ENCODE measurements at regions of chr2 and their contacts with region 1.

Region 1: DNA sequence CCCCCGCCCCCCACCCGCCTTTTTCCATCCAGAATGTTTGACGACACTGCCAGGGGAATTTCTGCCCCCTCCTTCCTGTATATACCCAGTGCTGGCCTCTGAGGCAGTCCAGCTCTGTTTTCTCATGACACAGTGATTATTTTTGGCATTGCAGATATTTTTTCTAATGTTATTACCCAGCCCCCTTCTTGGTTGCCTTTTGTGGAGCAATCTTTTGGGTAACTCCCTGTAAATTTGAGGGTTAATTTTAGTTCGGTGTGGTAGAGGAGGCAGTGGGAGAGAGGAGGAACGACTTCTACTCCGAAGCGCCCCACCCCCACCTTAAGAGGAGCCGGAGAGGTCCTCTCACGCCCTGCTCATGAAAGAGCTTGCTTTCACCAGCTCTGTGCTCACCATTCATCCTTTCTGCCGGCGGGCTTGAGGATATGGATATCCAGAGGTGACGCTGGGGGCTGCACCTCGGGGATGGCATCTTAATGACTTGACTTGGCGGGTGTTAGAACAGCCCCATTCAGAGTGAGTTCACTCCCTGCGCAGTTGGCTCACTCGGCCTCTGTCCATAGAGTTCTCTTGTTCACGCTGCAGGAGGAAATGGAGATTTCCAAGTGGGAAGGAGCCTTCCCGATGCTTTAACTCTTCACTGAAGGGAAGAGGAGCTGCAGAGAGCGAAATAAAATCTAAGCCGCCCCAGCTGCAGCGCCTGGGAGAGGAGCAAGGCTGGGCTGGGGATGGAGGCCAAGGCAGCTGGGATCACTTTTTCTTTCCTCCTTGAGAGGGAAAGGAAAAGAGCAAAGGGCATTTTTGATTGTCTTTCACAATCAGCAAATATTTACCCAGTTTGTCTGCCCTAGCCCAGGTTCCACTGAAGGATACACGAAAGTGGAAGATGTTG is 38.4 kb downstream of the EPAS1 start:
- DNase-seq: no peak
- H3K4me3 ChIP-seq: peak overlapping the region; percentile 21 to 50
- H3K27ac ChIP-seq: peak overlapping the region; percentile 100
- H3K4me1 ChIP-seq: peaks cover 86 to 97% of the 10 kb centered on the region in 2 experiments
- H3K27me3 ChIP-seq: no peaks in the 10 kb centered on the region
- CTCF ChIP-seq: no peak
- EP300 ChIP-seq: 0 out of 4 replicates have a peak, but pooled peaks of 1 of the 2 experiments have one; percentile 29
- RAD21 ChIP-seq: no peak

Region 2: GRCh38 chr2:46079996-46080560 is 255.6 kb before region 1 on chr2:
- CTCF ChIA-PET with region 1: interaction called, 11 read pairs
- POLR2A ChIA-PET with region 1: no interaction called
- DNase-seq: no peak
- H3K4me3 ChIP-seq: no peak overlapping the region
- H3K27ac ChIP-seq: no peak overlapping the region
- H3K4me1 ChIP-seq: peaks cover 5 to 10% of the 10 kb centered on the region in 2 experiments; a peak in 2 of 4 replicates
- H3K27me3 ChIP-seq: no peaks in the 10 kb centered on the region
- CTCF ChIP-seq: no peak
- EP300 ChIP-seq: no peak
- RAD21 ChIP-seq: no peak

Region 3: DNA sequence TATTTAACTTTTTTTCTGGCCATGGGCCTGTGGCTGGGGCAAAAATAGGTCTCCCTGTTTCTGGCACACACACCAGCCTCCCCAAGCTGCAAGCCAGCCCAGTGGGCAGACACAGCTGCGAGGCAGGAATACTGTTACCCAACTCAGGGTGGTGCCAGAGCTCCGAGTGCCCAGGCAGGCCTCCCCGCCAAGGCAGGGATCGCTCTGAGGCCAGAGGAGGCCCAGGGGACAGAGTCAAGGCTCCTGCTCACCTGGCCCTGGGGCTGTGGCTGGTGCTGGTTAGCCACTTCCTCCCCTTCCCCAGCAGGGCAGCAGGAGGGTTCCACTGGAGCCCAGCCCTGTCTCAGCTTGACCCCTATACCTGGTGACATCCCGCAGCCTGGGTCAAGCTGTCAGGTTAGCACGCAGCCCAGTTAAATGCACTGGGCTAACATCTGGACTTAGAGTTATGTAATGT is 105.5 kb before region 1 on chr2:
- CTCF ChIA-PET with region 1: no interaction called
- POLR2A ChIA-PET with region 1: no interaction called
- DNase-seq: no peak
- H3K4me3 ChIP-seq: no peak overlapping the region
- H3K27ac ChIP-seq: no peak overlapping the region
- H3K4me1 ChIP-seq: peaks cover 0 to 15% of the 10 kb centered on the region in 2 experiments; a peak in 2 of 4 replicates
- H3K27me3 ChIP-seq: no peaks in the 10 kb centered on the region
- CTCF ChIP-seq: no peak
- EP300 ChIP-seq: no peak
- RAD21 ChIP-seq: peak; percentile 31

Region 4: DNA sequence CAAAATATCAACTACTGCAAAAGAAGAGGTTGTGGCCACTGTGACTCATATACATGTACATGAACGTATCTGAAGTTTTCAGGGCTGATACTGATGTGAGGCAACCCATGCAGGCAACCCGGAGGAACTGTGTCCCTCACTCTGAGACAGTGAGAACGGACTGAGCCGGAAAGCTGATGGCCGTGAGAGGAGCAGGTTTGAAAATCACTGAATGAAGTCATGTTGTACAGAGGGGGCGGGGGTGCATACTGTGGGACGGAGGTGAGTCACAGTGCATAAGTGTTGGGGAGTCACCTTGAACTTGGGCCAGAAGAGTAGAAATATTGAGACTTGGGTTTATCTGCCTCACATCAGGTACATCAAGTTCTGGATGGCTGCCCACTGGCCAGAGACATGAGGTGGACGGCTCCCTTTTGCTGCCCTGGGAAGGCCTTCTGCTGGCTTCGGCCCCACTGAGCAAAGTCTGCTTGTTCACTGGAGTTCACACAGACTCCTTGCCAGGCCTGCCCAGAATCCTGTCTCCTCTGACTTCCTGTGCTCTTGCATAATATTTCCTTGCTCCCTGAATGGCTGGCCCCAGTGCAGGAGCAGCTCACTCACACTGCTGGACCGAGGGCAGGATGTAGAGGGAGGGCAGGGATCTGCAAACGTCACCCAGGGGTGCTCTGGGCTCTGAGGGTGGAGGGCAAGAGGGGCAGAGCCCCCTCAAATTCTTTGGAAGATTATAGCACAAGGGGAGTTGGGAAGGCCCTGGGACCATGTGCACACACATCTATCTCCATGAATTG is 20.3 kb before region 1 on chr2:
- CTCF ChIA-PET with region 1: interaction called, 19 read pairs
- POLR2A ChIA-PET with region 1: interaction called, 29 read pairs
- DNase-seq: peak; percentile 50
- H3K4me3 ChIP-seq: peak overlapping the region in 1 of 2 experiments; percentile 25; a peak in 2 of 4 replicates
- H3K27ac ChIP-seq: peak overlapping the region; percentile 92 to 98
- H3K4me1 ChIP-seq: peaks cover 46 to 69% of the 10 kb centered on the region in 2 experiments
- H3K27me3 ChIP-seq: no peaks in the 10 kb centered on the region
- CTCF ChIP-seq: no peak
- EP300 ChIP-seq: peak; percentile 12 to 96; a peak in 3 of 4 replicates
- RAD21 ChIP-seq: no peak

Region 5: GRCh38 chr2:46377176-46377581 is 41.5 kb after region 1 on chr2:
- CTCF ChIA-PET with region 1: interaction called, 22 read pairs
- POLR2A ChIA-PET with region 1: interaction called, 13 read pairs
- DNase-seq: peak; percentile 47
- H3K4me3 ChIP-seq: no peak overlapping the region
- H3K27ac ChIP-seq: peak overlapping the region in 1 of 2 experiments; percentile 98; a peak in 1 of 4 replicates
- H3K4me1 ChIP-seq: peaks cover 0 to 54% of the 10 kb centered on the region in 2 experiments; a peak in 2 of 4 replicates
- H3K27me3 ChIP-seq: no peaks in the 10 kb centered on the region
- CTCF ChIP-seq: peak; percentile 13; the same call in 1 of the 2 replicates
- EP300 ChIP-seq: no peak
- RAD21 ChIP-seq: peak; percentile 43

Measured in SK-N-SH (cell line).